ENCODE measurements at regions of chr7 and their contacts with region 1.

Region 1: GRCh38 chr7:50782384-50783208 is at the start of gene GRB10:
- DNase-seq: peak; percentile 52 to 82 (median 80)
- ATAC-seq: peak; percentile 75 to 85
- H3K4me3 ChIP-seq: peak within 1 kb of the TSS; percentile 50
- H3K27ac ChIP-seq: no peak within 1 kb of the TSS
- H3K4me1 ChIP-seq: peaks cover 20% of the 10 kb centered on the region
- H3K27me3 ChIP-seq: no peaks in the 10 kb centered on the region
- total RNA-seq, gene GRB10: 52.0 to 86.0 (median 63.9) TPM

Region 2: GRCh38 chr7:50733555-50733954 is 49.0 kb before region 1 on chr7:
- intact Hi-C with region 1: loop called in 1 of 4 experiments (anchors 5 kb)
- DNase-seq: no peak
- ATAC-seq: no peak
- H3K4me3 ChIP-seq: no peak overlapping the region
- H3K27ac ChIP-seq: no peak overlapping the region
- H3K4me1 ChIP-seq: peaks cover 11% of the 10 kb centered on the region
- H3K27me3 ChIP-seq: no peaks in the 10 kb centered on the region